A673 (cell line): ENCODE measurements at regions of chr2 and their contacts with region 1.

Region 1: GRCh38 chr2:184599872-184600222 is 1.5 kb downstream of the ZNF804A start:
- DNase-seq: no peak
- H3K4me3 ChIP-seq: peak overlapping the region; percentile 74
- H3K27ac ChIP-seq: peak overlapping the region; percentile 37
- H3K4me1 ChIP-seq: peaks cover 34% of the 10 kb centered on the region
- H3K27me3 ChIP-seq: no peaks in the 10 kb centered on the region
- CTCF ChIP-seq: no peak

Region 2: GRCh38 chr2:184562532-184562931 is 37.3 kb before region 1 on chr2:
- CTCF ChIA-PET with region 1: no interaction called
- POLR2A ChIA-PET with region 1: no interaction called
- intact Hi-C with region 1: no loop called
- DNase-seq: no peak
- H3K4me3 ChIP-seq: no peak overlapping the region
- H3K27ac ChIP-seq: no peak overlapping the region
- H3K4me1 ChIP-seq: no peaks in the 10 kb centered on the region
- H3K27me3 ChIP-seq: no peaks in the 10 kb centered on the region
- CTCF ChIP-seq: no peak

Region 3: GRCh38 chr2:184860744-184861143 is 260.9 kb after region 1 on chr2:
- CTCF ChIA-PET with region 1: no interaction called
- POLR2A ChIA-PET with region 1: no interaction called
- intact Hi-C with region 1: no loop called
- DNase-seq: no peak
- H3K4me3 ChIP-seq: no peak overlapping the region
- H3K27ac ChIP-seq: no peak overlapping the region
- H3K4me1 ChIP-seq: no peaks in the 10 kb centered on the region
- H3K27me3 ChIP-seq: no peaks in the 10 kb centered on the region
- CTCF ChIP-seq: no peak

Region 4: GRCh38 chr2:185208261-185208660 is 608.4 kb after region 1 on chr2:
- CTCF ChIA-PET with region 1: no interaction called
- POLR2A ChIA-PET with region 1: no interaction called
- intact Hi-C with region 1: loop called (anchors 10 kb)
- DNase-seq: peak; percentile 62
- H3K4me3 ChIP-seq: no peak overlapping the region
- H3K27ac ChIP-seq: no peak overlapping the region
- H3K4me1 ChIP-seq: no peaks in the 10 kb centered on the region
- H3K27me3 ChIP-seq: no peaks in the 10 kb centered on the region
- CTCF ChIP-seq: peak; percentile 66